ENCODE measurements at regions of chr17 and their contacts with region 1.

Region 1: DNA sequence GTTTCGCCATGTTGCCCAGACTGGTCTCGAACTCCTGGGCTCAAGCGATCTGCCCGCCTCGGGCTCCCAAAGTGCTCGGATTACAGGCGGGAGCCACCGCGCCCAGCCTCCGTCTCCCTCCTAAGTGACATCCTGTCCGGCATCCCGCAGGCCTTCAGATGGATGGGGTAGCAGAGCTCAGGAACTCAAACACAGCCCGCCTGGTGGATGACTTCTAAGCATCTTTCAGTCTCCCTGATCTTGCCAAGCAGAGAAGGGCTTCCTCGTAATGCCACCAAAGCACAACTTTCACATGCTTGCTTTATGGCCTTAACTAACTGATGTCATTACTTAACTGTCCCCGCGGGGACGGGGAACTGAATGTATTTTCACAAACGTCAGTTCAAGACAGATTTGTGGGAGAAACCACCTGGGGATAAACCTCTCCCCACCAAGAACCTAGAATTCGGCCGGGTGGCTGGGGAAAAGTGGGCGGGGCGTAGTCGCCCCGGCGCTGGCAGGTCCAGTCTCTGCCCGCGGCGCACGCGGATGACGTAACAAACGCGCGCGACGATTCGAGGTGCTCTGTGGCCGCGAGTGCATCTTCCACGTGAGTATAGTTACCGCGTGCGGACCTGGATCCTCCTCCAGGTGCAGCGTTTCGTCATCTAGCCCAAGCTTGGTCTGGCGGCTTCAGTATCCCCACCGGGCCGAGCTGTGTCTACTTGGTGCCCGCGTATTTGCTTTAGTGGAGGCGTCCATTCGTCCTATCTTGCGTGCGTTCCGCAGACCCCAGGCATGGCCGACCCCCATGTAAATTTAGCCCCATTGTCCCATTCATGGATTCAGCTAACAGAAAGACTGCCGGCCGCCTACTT is at the start of gene PFAS:
- DNase-seq: peak; percentile 92 to 98 (median 96)
- ATAC-seq: peak; percentile 39
- H3K4me3 ChIP-seq: peak within 1 kb of the TSS; percentile 84 to 95
- H3K4me3 Mint-ChIP-seq: peak within 1 kb of the TSS; percentile 98
- H3K27ac ChIP-seq: peak within 1 kb of the TSS; percentile 97 to 98
- H3K27ac Mint-ChIP-seq: peak within 1 kb of the TSS; percentile 100
- H3K4me1 ChIP-seq: peaks cover 34% of the 10 kb centered on the region
- H3K4me1 Mint-ChIP-seq: peaks cover 48% of the 10 kb centered on the region
- H3K27me3 ChIP-seq: no peaks in the 10 kb centered on the region
- H3K27me3 Mint-ChIP-seq: no peaks in the 10 kb centered on the region
- CTCF ChIP-seq: no peak
- total RNA-seq, gene PFAS: 23.8 to 25.0 TPM

Region 2: DNA sequence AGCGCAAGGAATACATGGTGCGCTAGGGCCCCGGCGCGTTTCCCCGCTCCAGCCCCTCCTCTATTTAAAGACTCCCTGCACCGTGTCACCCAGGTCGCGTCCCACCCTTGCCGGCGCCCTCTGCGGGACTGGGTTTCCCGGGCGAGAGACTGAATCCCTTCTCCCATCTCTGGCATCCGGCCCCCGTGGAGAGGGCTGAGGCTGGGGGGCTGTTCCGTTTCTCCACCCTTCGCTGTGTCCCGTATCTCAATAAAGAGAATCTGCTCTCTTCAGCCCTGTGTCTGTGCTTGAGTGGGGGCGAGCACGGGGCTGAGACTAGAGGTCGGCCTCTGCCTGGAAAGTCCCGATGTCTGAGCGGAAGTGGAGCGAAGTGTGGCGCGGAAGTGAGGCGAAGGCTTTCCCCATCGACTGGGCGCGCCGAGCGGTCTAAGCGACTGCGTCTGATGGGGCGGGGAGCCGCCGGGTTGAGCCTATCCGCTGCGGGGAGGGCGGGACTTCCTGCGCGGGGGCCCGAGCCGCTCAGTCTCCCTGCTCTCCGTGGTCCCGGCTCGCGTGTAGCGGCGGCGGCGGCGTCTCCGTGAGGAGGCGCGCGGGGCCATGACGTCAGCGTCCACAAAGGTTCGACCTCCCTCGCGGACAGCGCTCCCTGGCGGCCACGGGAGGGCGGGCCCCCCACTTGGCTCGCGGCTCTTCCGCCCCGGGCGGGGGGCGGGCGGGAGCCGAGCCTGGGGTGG is 1234.6 kb before region 1 on chr17:
- CTCF ChIA-PET with region 1: no interaction called
- POLR2A ChIA-PET with region 1: no interaction called
- intact Hi-C with region 1: loop called in 1 of 2 experiments (anchors 5 kb)
- DNase-seq: peak; percentile 94 to 100 (median 97)
- ATAC-seq: peak; percentile 79
- H3K4me3 ChIP-seq: peak overlapping the region; percentile 69 to 70
- H3K4me3 Mint-ChIP-seq: peak overlapping the region; percentile 98
- H3K27ac ChIP-seq: peak overlapping the region; percentile 95 to 99
- H3K27ac Mint-ChIP-seq: peak overlapping the region; percentile 100
- H3K4me1 ChIP-seq: peaks cover 63% of the 10 kb centered on the region
- H3K4me1 Mint-ChIP-seq: peaks cover 78% of the 10 kb centered on the region
- H3K27me3 ChIP-seq: no peaks in the 10 kb centered on the region
- H3K27me3 Mint-ChIP-seq: no peaks in the 10 kb centered on the region
- CTCF ChIP-seq: peak; percentile 61

Region 3: DNA sequence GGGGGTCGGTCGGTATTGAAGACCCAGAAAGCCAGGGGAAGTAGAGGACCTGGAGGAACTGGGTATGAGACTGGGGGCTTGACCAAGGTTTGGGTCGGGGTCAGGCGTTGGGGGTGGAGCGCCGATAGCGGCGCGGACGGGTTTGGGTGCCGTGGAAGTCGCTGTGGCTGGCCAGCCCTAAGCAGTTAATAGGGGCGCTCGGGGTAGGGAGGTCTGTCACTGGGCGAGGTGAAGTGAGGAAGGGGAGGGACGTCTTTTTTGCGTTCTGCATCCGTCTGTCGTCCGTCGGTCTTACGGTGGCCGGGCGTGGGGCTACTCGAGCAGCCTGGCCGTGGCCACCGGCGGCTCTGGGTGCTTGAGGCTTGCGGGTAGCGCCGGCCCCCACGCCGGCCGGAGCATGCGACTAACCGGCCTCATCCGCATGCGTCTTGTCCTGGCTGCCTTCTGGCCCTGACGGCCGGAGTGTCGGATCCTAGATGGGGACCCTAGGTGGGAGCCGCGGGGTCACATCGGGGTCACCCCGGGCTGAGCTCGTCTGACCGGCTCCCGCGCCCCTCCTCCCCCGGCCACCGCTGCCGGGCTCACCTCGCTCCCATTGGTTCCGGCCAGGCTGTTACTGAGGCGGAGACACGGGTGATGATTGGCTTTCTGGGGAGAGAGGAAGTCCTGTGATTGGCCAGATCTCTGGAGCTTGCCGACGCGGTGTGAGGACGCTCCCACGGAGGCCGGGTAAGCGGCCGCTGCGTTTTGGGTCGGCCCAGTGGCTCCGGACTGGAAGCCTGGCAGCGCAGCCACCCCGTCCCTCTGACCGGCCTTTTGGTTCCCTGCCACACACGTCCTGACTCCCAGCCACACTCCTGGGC is 404.5 kb before region 1 on chr17:
- CTCF ChIA-PET with region 1: no interaction called
- POLR2A ChIA-PET with region 1: no interaction called
- intact Hi-C with region 1: loop called (anchors 5 kb)
- DNase-seq: peak; percentile 67 to 94 (median 79)
- ATAC-seq: peak; percentile 8
- H3K4me3 ChIP-seq: peak overlapping the region; percentile 94 to 98
- H3K4me3 Mint-ChIP-seq: peak overlapping the region; percentile 91
- H3K27ac ChIP-seq: peak overlapping the region; percentile 98 to 100
- H3K27ac Mint-ChIP-seq: peak overlapping the region; percentile 99
- H3K4me1 ChIP-seq: peaks cover 39% of the 10 kb centered on the region
- H3K4me1 Mint-ChIP-seq: peaks cover 33% of the 10 kb centered on the region
- H3K27me3 ChIP-seq: no peaks in the 10 kb centered on the region
- H3K27me3 Mint-ChIP-seq: no peaks in the 10 kb centered on the region
- CTCF ChIP-seq: no peak

Region 4: DNA sequence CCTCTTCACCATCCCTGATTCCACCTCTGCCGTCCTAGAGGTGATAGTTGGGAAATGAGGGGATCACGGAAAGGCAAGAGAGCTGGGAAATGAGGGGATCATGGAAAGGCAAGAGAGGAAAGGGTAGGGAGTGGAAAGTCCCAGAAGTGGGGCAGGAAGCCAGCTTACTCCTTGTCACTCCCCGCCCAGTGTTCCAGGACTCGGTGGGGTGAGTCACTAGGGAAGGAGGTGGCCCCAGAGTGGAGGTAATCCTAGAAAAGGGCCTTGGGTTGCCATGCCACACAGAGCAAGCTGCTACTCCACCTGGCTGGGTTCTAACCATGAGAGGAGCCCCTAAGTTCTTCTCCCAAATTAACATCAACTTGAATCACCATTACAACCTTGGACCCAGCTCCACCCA is 145.4 kb before region 1 on chr17:
- CTCF ChIA-PET with region 1: no interaction called
- POLR2A ChIA-PET with region 1: no interaction called
- intact Hi-C with region 1: no loop called
- DNase-seq: no peak
- ATAC-seq: no peak
- H3K4me3 ChIP-seq: no peak overlapping the region
- H3K4me3 Mint-ChIP-seq: no peak overlapping the region
- H3K27ac ChIP-seq: no peak overlapping the region
- H3K27ac Mint-ChIP-seq: no peak overlapping the region
- H3K4me1 ChIP-seq: no peaks in the 10 kb centered on the region
- H3K4me1 Mint-ChIP-seq: no peaks in the 10 kb centered on the region
- H3K27me3 ChIP-seq: no peaks in the 10 kb centered on the region
- H3K27me3 Mint-ChIP-seq: peaks cover 2% of the 10 kb centered on the region
- CTCF ChIP-seq: no peak

Region 5: DNA sequence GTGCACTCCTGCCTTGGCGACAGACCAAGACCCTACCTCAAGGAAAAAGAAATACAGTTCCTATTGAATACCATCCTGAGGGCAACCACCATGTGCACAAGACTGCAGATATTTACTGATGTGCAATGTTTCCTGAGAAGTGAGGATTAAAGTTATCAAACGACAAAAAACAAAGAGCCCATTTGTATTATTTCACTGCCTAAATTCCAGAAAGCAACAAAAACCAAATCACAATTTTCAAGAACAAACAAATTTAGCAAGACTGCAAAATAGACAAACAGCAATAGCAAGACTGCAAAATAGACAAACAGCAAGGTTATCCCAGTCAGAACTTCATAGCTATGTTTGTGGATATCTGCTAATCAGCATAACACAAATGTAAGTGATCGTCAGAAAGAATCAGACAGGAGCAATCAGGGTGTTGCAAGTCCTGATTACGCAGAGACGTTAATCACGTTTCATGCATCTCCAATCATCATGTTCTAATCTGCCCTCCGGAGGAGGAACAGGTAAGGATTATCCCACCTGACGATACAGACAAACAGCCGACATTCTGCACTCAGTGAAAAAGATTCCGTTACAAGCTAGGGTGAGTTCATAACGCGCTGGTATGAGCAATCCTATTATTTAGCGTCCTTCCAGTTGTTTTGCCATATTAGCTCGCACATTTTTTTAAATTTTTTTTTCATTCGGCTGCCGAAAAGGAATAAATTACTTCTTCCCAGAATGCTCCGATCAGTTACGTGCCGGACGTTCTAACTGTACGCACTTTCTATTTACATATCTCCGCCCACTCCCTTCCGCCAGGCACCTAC is 75.7 kb before region 1 on chr17:
- CTCF ChIA-PET with region 1: no interaction called
- POLR2A ChIA-PET with region 1: interaction called, 15 read pairs
- intact Hi-C with region 1: no loop called
- DNase-seq: peak in 7 of 9 experiments; percentile 61 to 96 (median 80)
- ATAC-seq: peak; percentile 84
- H3K4me3 ChIP-seq: peak overlapping the region; percentile 39 to 46
- H3K4me3 Mint-ChIP-seq: peak overlapping the region; percentile 83
- H3K27ac ChIP-seq: peak overlapping the region; percentile 94 to 98
- H3K27ac Mint-ChIP-seq: peak overlapping the region; percentile 100
- H3K4me1 ChIP-seq: peaks cover 40% of the 10 kb centered on the region
- H3K4me1 Mint-ChIP-seq: peaks cover 50% of the 10 kb centered on the region
- H3K27me3 ChIP-seq: no peaks in the 10 kb centered on the region
- H3K27me3 Mint-ChIP-seq: no peaks in the 10 kb centered on the region
- CTCF ChIP-seq: no peak

Region 6: GRCh38 chr17:8237175-8237574 is 11.8 kb before region 1 on chr17:
- CTCF ChIA-PET with region 1: interaction called, 6 read pairs
- POLR2A ChIA-PET with region 1: interaction called, 18 read pairs
- intact Hi-C with region 1: no loop called
- DNase-seq: no peak
- ATAC-seq: no peak
- H3K4me3 ChIP-seq: no peak overlapping the region
- H3K4me3 Mint-ChIP-seq: no peak overlapping the region
- H3K27ac ChIP-seq: no peak overlapping the region
- H3K27ac Mint-ChIP-seq: no peak overlapping the region
- H3K4me1 ChIP-seq: peaks cover 4% of the 10 kb centered on the region
- H3K4me1 Mint-ChIP-seq: peaks cover 31% of the 10 kb centered on the region
- H3K27me3 ChIP-seq: no peaks in the 10 kb centered on the region
- H3K27me3 Mint-ChIP-seq: no peaks in the 10 kb centered on the region
- CTCF ChIP-seq: no peak

Region 7: GRCh38 chr17:8300627-8301242 is 51.8 kb after region 1 on chr17:
- CTCF ChIA-PET with region 1: interaction called, 18 read pairs
- POLR2A ChIA-PET with region 1: interaction called, 39 read pairs
- intact Hi-C with region 1: loop called (anchors 1 kb)
- DNase-seq: peak; percentile 29 to 86 (median 63)
- ATAC-seq: peak; percentile 93
- H3K4me3 ChIP-seq: no peak overlapping the region
- H3K4me3 Mint-ChIP-seq: no peak overlapping the region
- H3K27ac ChIP-seq: no peak overlapping the region
- H3K27ac Mint-ChIP-seq: peak overlapping the region; percentile 55
- H3K4me1 ChIP-seq: peaks cover 4% of the 10 kb centered on the region
- H3K4me1 Mint-ChIP-seq: peaks cover 9% of the 10 kb centered on the region
- H3K27me3 ChIP-seq: no peaks in the 10 kb centered on the region
- H3K27me3 Mint-ChIP-seq: no peaks in the 10 kb centered on the region
- CTCF ChIP-seq: peak; percentile 76

Measured in CD8-positive, alpha-beta T cell (primary cell).